Activated CD8-positive, alpha-beta T cell treated with anti-CD3 and anti-CD28 coated beads, Interleukin-2, amount 10 ng/mL, durations not matched to agents 7 days and 5 days (primary cell): ENCODE measurements at regions of chr2 and their contacts with region 1.

Region 1: GRCh38 chr2:73176881-73177644 is 25.3 kb upstream of the NOTO start:
- DNase-seq: peak; percentile 93
- ATAC-seq: peak; percentile 94
- H3K4me3 Mint-ChIP-seq: peak overlapping the region; percentile 80
- H3K27ac Mint-ChIP-seq: peak overlapping the region; percentile 56
- H3K4me1 Mint-ChIP-seq: peaks cover 23% of the 10 kb centered on the region
- H3K27me3 Mint-ChIP-seq: peaks cover 51% of the 10 kb centered on the region

Region 2: GRCh38 chr2:72887754-72888437 is 289.2 kb before region 1 on chr2:
- CTCF ChIA-PET with region 1: interaction called, 59 read pairs
- POLR2A ChIA-PET with region 1: no interaction called
- DNase-seq: peak; percentile 63
- ATAC-seq: peak; percentile 50
- H3K4me3 Mint-ChIP-seq: peak overlapping the region; percentile 65
- H3K27ac Mint-ChIP-seq: no peak overlapping the region
- H3K4me1 Mint-ChIP-seq: peaks cover 2% of the 10 kb centered on the region
- H3K27me3 Mint-ChIP-seq: peaks cover 39% of the 10 kb centered on the region

Region 3: DNA sequence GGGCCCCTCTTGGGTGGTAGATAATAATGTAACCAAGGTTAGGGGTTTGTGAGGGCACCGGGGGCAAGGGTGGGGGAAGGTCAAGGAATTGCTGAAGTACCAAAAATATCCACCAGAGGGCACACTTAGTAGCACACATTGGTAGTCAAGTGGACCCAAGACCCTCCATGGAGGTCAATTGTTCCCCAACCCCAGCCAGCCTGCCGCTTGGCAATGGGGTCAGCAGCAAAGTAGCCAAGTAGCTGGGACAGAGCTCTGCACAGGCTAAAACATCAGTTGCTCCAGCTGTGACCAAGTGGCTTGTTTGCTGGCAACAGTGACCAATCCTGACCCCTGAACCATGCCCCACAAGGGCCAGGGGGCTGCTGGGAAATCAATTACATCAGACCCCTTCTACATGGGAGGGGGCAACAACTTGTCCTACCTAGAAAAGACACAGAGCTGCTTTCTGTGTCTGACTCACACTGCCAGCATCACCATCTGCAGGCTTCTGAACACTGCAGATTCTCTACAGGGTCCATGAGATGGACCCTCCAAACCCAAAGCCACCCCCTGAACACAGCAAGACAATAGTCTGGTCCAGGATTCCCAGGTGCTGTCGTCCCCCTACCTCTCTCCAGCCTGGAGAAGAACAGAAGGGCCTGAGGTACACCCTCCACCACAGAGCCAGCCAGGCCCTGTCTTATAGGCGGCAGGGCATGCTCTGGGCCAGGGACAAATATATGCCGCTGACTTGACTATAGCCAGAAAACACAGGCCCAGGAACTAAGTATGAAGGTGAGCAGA is 183.7 kb before region 1 on chr2:
- CTCF ChIA-PET with region 1: interaction called, 47 read pairs
- POLR2A ChIA-PET with region 1: no interaction called
- DNase-seq: peak; percentile 59
- ATAC-seq: peak; percentile 53
- H3K4me3 Mint-ChIP-seq: no peak overlapping the region
- H3K27ac Mint-ChIP-seq: no peak overlapping the region
- H3K4me1 Mint-ChIP-seq: no peaks in the 10 kb centered on the region
- H3K27me3 Mint-ChIP-seq: no peaks in the 10 kb centered on the region

Region 4: DNA sequence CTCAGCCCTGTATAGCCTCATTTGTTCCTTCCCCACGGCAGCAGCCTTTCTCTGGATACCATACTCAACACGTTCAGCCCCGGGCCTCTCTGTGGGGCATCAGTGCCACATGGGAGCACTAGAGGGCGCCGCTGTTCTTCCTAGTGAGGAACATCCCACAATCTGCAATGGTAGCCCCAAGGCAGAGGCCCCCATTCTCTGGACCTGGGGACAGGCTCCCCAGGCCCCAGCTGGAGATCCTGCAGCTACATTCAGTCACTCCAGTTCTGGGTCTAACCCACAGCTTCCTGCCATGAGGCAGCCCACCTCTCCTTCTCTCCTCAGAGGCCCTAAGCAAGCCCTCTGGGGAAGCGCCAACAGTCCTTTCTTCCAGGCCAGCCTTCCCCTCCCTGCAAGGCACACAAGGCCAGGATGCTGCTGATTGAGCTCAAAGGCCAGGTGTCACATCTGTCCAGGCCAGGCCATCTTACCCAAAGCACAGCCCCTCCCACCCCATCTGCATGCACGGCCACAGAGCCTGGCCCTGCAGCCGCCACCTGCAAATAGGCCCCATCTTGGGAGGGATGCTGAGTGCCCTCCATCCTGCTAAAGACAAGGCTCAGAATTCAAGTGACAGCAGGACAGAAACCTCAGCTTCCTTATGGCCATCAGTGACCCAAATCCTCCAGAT is 91.2 kb before region 1 on chr2:
- CTCF ChIA-PET with region 1: interaction called, 72 read pairs
- POLR2A ChIA-PET with region 1: no interaction called
- DNase-seq: peak; percentile 88
- ATAC-seq: peak; percentile 89
- H3K4me3 Mint-ChIP-seq: no peak overlapping the region
- H3K27ac Mint-ChIP-seq: no peak overlapping the region
- H3K4me1 Mint-ChIP-seq: no peaks in the 10 kb centered on the region
- H3K27me3 Mint-ChIP-seq: no peaks in the 10 kb centered on the region

Region 5: DNA sequence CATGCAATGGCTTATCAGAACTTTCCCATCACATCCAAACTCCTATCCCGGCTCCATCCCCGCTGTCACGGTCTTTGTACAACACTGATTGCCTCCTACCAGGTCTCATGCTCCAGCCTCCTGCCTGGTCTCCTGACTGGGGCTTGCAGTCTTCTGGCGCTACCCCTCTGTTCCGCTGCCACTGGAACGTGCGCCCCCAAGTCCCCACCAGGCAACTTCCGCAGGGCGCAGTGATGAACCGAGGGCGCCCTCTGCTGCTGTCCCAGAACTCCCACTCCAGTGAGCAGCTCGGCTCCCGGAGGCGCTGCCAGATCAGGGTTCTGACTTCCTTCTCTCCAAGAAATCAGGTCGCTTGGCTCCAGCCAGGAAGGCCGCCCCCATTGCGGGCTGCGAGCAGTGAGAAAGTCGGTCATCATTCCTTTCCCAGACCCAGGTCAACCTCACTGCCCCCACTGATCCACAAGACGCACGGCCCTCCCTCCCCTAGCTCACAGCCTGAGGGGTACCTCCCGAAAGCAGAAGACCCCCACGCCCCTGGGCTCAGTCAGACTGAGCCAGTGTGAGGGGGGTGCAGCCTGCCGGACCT is 20.4 kb before region 1 on chr2:
- CTCF ChIA-PET with region 1: interaction called, 20 read pairs
- POLR2A ChIA-PET with region 1: no interaction called
- DNase-seq: peak; percentile 52
- ATAC-seq: peak; percentile 72
- H3K4me3 Mint-ChIP-seq: no peak overlapping the region
- H3K27ac Mint-ChIP-seq: no peak overlapping the region
- H3K4me1 Mint-ChIP-seq: peaks cover 4% of the 10 kb centered on the region
- H3K27me3 Mint-ChIP-seq: peaks cover 39% of the 10 kb centered on the region

Region 6: DNA sequence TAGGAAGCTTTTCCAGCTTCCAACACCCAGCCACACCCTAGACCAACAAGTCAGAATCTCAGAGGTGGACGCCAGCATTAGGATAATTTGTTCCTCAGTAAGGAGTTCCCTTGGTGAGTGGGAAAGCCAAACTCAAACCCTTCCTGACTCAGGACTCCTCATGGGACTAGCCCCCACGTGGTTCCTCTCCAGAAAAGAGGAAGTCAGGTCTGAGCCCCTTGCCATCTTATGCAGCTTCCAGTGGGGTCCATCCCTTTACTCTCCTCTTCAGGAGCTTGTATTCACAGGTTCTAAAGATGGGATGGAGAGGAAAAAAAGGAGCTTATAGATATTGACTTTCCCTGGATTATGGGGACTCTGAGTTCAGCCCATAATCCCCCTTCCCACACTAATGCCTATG is 10.5 kb after region 1 on chr2:
- CTCF ChIA-PET with region 1: interaction called, 18 read pairs
- POLR2A ChIA-PET with region 1: no interaction called
- DNase-seq: no peak
- ATAC-seq: no peak
- H3K4me3 Mint-ChIP-seq: no peak overlapping the region
- H3K27ac Mint-ChIP-seq: no peak overlapping the region
- H3K4me1 Mint-ChIP-seq: no peaks in the 10 kb centered on the region
- H3K27me3 Mint-ChIP-seq: peaks cover 28% of the 10 kb centered on the region

Region 7: DNA sequence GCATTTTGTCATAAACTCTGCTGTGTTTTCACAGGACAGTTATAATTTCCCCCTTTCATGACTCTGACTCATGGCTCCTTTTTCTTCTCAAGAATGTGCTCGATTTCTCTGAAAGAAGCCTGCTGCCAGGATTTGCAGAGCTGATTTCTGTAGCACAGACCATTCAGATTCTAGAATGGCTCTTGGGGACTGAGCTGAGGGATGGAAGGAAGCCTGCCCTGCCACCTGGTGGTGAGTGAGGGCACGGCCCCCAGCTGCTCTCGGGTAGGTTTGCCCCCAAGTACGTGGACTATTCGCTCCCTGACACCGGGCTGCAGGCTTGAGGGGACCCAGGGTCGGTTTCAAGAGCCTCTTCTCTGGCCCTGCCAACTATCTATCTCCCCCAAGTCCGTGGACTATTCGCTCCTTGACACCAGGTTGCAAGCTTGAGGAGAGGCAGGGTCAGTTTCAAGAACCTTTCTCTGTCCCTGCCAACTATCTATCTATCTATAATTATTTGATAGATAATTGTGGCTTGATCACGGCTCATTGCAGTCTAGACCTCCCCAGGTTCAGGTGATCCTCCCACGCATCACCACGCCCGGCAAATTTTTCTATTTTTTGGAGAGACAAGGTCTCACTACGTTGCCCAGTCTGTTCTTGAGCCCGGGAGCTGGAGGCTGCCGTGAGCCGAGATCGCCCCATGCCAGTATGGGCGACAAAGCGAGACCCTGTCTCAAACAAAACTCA is 35.5 kb after region 1 on chr2:
- CTCF ChIA-PET with region 1: interaction called, 112 read pairs
- POLR2A ChIA-PET with region 1: interaction called, 5 read pairs
- DNase-seq: peak; percentile 83
- ATAC-seq: peak; percentile 73
- H3K4me3 Mint-ChIP-seq: peak overlapping the region; percentile 14
- H3K27ac Mint-ChIP-seq: no peak overlapping the region
- H3K4me1 Mint-ChIP-seq: peaks cover 28% of the 10 kb centered on the region
- H3K27me3 Mint-ChIP-seq: peaks cover 10% of the 10 kb centered on the region

Region 8: GRCh38 chr2:73238976-73239375 is 61.9 kb after region 1 on chr2:
- CTCF ChIA-PET with region 1: no interaction called
- POLR2A ChIA-PET with region 1: no interaction called
- DNase-seq: no peak
- ATAC-seq: no peak
- H3K4me3 Mint-ChIP-seq: no peak overlapping the region
- H3K27ac Mint-ChIP-seq: peak overlapping the region; percentile 44
- H3K4me1 Mint-ChIP-seq: peaks cover 46% of the 10 kb centered on the region
- H3K27me3 Mint-ChIP-seq: no peaks in the 10 kb centered on the region

Region 9: GRCh38 chr2:73337828-73338227 is 160.8 kb after region 1 on chr2:
- CTCF ChIA-PET with region 1: no interaction called
- POLR2A ChIA-PET with region 1: no interaction called
- DNase-seq: no peak
- ATAC-seq: no peak
- H3K4me3 Mint-ChIP-seq: no peak overlapping the region
- H3K27ac Mint-ChIP-seq: no peak overlapping the region
- H3K4me1 Mint-ChIP-seq: peaks cover 10% of the 10 kb centered on the region
- H3K27me3 Mint-ChIP-seq: peaks cover 9% of the 10 kb centered on the region